ENCODE measurements at regions of chrX and their contacts with region 1.

Region 1: DNA sequence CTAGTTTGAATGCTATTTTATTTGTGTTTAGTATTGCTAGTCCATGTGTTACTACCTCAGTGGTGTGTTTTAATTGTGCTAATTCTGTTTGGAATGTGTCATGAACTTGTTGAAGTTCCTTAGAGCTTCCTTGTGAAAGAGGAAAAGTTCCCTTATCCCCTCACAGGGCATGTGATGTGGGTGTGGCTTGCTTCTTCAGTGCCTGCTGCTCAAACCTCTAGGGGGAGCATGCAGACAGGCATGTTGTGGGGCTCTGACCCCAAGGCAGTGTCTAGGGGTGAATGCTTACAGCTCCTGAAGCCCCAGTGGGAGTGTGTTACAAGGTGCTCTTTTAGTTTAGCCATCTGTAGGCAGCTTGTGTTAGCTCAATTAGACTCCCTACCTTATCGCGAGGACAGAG is 86.5 kb downstream of the MAGED4 start:
- DNase-seq: peak; percentile 9
- H3K4me3 ChIP-seq: no peak overlapping the region
- H3K27ac ChIP-seq: no peak overlapping the region
- H3K4me1 ChIP-seq: no peaks in the 10 kb centered on the region
- H3K27me3 ChIP-seq: peaks cover 4% of the 10 kb centered on the region
- CTCF ChIP-seq: peak; percentile 25 to 28

Region 2: DNA sequence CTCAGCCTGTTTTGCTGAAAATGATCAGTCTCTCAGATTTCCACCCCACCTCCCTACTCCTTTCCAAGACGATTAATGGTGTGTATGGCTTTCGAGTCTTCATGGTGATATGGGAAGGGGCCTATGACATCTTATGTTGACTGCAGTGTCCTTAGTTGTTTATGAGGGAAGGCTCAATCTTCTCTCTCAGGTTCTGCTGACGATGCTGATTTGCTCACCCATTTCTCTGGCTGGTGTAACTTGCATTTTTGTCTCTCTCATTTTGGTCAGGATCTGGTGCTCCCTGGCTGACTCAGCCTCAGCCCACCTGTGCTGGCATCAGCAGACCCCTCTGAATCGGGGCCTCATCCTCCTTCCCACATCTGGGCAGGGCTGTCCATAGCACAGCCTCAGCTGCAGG is 66.2 kb after region 1 on chrX:
- CTCF ChIA-PET with region 1: no interaction called
- dilution Hi-C with region 1: no loop called
- in situ Hi-C with region 1: loop called in 1 of 2 experiments (anchors 10 kb)
- intact Hi-C with region 1: no loop called
- DNase-seq: no peak
- H3K4me3 ChIP-seq: no peak overlapping the region
- H3K27ac ChIP-seq: no peak overlapping the region
- H3K4me1 ChIP-seq: no peaks in the 10 kb centered on the region
- H3K27me3 ChIP-seq: peaks cover 2% of the 10 kb centered on the region
- CTCF ChIP-seq: no peak

Region 3: GRCh38 chrX:52363247-52363883 is 92.2 kb after region 1 on chrX:
- CTCF ChIA-PET with region 1: no interaction called
- dilution Hi-C with region 1: no loop called
- in situ Hi-C with region 1: no loop called
- intact Hi-C with region 1: no loop called
- DNase-seq: no peak
- H3K4me3 ChIP-seq: no peak overlapping the region
- H3K27ac ChIP-seq: no peak overlapping the region
- H3K4me1 ChIP-seq: no peaks in the 10 kb centered on the region
- H3K27me3 ChIP-seq: peaks cover 7% of the 10 kb centered on the region
- CTCF ChIP-seq: peak in 1 of 2 donors; percentile 3

Measured in mammary epithelial cell (primary cell).